ENCODE measurements at regions of chr6 and their contacts with region 1.

Region 1: DNA sequence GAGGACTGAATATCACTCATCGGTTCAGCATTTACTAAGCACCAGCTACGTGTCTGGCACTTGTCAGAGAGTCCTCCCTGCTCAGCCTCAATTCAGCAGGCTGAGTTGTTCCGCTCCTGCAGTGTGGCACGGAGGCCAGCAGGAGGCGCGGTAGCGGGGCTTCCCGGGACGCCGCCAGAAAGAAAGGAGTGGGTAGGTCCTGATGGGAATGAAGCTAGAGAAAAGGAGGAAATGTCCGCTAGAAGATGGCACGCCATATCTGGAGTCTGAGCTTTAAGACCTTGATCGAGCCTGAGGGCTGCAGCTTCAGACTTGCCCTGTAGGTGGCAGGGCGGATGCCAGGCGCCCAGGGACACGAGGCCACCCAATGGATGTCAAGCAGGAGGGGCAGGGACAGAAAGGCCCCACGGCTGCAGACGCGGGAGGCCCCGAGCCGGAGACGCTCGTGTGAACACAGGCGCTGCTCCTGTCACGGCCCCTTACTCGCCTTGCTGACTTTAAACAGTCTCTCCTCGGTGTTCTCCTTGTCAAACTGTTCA is 18.7 kb downstream of the SERPINB6 start:
- DNase-seq: peak; percentile 76
- ATAC-seq: peak; percentile 79
- H3K4me3 ChIP-seq: no peak overlapping the region
- H3K27ac ChIP-seq: 0 out of 2 replicates have a peak overlapping the region, but pooled peaks have one; percentile 2
- H3K4me1 ChIP-seq: peaks cover 13% of the 10 kb centered on the region
- H3K27me3 ChIP-seq: no peaks in the 10 kb centered on the region
- CTCF ChIP-seq: peak; percentile 98

Region 2: GRCh38 chr6:2432239-2432638 is 520.4 kb before region 1 on chr6:
- CTCF ChIA-PET with region 1: no interaction called
- POLR2A ChIA-PET with region 1: interaction called, 13 read pairs
- intact Hi-C with region 1: no loop called
- DNase-seq: peak; percentile 93
- ATAC-seq: peak; percentile 76
- H3K4me3 ChIP-seq: no peak overlapping the region
- H3K27ac ChIP-seq: peak overlapping the region; percentile 83
- H3K4me1 ChIP-seq: peaks cover 37% of the 10 kb centered on the region
- H3K27me3 ChIP-seq: no peaks in the 10 kb centered on the region
- CTCF ChIP-seq: no peak

Measured in PC-3 (cell line).